IMR-90 (cell line): ENCODE measurements at regions of chr7 and their contacts with region 1.

Region 1: DNA sequence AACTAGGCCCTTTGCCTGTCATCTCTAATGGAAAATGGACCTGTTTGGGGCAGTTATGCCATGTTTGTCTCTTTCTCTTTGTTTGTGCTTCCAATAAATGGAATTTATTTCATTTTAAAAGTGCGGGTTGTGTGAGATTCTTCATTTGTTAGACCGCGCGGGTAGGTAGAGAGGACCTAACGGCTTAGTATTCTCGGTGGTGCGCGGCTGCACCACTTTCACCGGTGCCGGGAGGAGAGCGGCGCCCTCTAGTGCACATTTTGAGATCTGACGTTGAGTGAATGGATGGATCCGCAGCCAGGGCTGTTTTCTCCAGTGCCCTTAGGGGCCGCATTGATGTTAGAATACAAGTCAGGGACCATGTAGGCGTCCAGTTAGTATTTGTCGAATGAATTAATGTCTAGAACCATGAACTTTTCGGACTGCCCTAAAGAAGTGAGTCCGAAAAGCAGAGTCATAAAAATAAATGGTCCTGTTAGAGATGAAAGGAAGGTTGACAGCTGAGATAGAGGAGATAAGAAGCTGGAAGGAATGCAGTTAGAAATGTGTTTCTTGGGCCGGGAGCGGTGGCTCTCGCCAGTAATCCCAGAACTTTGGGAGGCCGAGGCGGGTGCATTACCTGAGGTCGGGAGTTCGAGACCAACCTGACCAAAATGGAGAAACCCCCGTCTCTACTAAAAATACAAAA is 29.3 kb upstream of the GIMAP8 start:
- DNase-seq: peak; percentile 58
- ATAC-seq: peak; percentile 99
- H3K4me3 ChIP-seq: no peak overlapping the region
- H3K27ac ChIP-seq: no peak overlapping the region
- H3K4me1 ChIP-seq: no peaks in the 10 kb centered on the region
- H3K27me3 ChIP-seq: no peaks in the 10 kb centered on the region
- CTCF ChIP-seq: peak; percentile 79
- POLR2A ChIP-seq: no peak
- RAD21 ChIP-seq: peak; percentile 86

Region 2: GRCh38 chr7:149873074-149873969 is 547.8 kb before region 1 on chr7 and contains the start of gene ATP6V0E2:
- CTCF ChIA-PET with region 1: no interaction called
- POLR2A ChIA-PET with region 1: no interaction called
- dilution Hi-C with region 1: no loop called
- in situ Hi-C with region 1: loop called (anchors 25 kb)
- intact Hi-C with region 1: no loop called
- DNase-seq: peak; percentile 89
- ATAC-seq: peak; percentile 97
- H3K4me3 ChIP-seq: peak within 1 kb of the TSS; percentile 74
- H3K27ac ChIP-seq: peak within 1 kb of the TSS; percentile 13; the same call in 1 of the 2 replicates
- H3K4me1 ChIP-seq: peaks cover 3% of the 10 kb centered on the region
- H3K27me3 ChIP-seq: no peaks in the 10 kb centered on the region
- CTCF ChIP-seq: no peak
- POLR2A ChIP-seq: peak; percentile 52; the same call in 1 of the 2 replicates
- RAD21 ChIP-seq: no peak
- total RNA-seq, gene ATP6V0E2: 5.7 and 10.3 TPM in 2 replicates

Region 3: GRCh38 chr7:150307904-150308303 is 113.2 kb before region 1 on chr7:
- CTCF ChIA-PET with region 1: no interaction called
- POLR2A ChIA-PET with region 1: no interaction called
- dilution Hi-C with region 1: no loop called
- in situ Hi-C with region 1: no loop called
- intact Hi-C with region 1: no loop called
- DNase-seq: no peak
- ATAC-seq: no peak
- H3K4me3 ChIP-seq: no peak overlapping the region
- H3K27ac ChIP-seq: no peak overlapping the region
- H3K4me1 ChIP-seq: peaks cover 3% of the 10 kb centered on the region; the same call in 1 of the 2 replicates
- H3K27me3 ChIP-seq: no peaks in the 10 kb centered on the region
- CTCF ChIP-seq: no peak
- POLR2A ChIP-seq: no peak
- RAD21 ChIP-seq: no peak

Region 4: DNA sequence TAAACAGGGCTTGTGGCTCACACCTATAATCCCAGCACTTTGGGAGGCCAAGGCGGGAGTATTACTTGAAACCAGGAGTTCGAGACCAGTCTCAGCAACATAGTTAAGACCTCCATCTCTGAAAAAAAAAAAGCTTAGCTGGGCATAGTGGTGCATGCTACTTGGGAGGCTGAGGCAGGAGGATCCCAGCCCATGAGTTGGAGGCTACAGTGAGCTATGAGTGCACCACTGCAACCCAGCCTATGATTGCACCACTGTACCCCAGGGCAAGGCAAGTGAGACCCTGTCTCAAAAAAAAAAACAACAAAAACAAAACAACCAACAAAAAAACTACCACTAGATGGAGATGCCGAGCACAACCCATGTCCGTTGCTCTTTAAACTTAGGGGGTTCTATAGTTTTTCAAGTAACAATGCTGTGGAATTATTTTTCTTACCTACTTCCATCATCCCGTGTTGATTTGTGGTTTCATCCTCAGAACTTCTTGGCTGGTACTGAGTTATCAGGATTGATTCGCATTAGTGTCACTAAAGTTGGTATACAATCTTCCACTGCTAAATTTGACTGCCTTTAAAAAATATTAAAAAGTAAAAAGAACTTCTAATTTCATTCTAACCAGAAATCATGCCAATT is 64.8 kb before region 1 on chr7:
- CTCF ChIA-PET with region 1: no interaction called
- POLR2A ChIA-PET with region 1: no interaction called
- dilution Hi-C with region 1: no loop called
- in situ Hi-C with region 1: no loop called
- intact Hi-C with region 1: loop called (anchors 2 kb)
- DNase-seq: peak; percentile 33
- ATAC-seq: peak; percentile 42; the same call in 1 of the 2 replicates
- H3K4me3 ChIP-seq: no peak overlapping the region
- H3K27ac ChIP-seq: no peak overlapping the region
- H3K4me1 ChIP-seq: no peaks in the 10 kb centered on the region; the same call in 1 of the 2 replicates
- H3K27me3 ChIP-seq: no peaks in the 10 kb centered on the region
- CTCF ChIP-seq: peak; percentile 65
- POLR2A ChIP-seq: no peak
- RAD21 ChIP-seq: peak; percentile 62

Region 5: DNA sequence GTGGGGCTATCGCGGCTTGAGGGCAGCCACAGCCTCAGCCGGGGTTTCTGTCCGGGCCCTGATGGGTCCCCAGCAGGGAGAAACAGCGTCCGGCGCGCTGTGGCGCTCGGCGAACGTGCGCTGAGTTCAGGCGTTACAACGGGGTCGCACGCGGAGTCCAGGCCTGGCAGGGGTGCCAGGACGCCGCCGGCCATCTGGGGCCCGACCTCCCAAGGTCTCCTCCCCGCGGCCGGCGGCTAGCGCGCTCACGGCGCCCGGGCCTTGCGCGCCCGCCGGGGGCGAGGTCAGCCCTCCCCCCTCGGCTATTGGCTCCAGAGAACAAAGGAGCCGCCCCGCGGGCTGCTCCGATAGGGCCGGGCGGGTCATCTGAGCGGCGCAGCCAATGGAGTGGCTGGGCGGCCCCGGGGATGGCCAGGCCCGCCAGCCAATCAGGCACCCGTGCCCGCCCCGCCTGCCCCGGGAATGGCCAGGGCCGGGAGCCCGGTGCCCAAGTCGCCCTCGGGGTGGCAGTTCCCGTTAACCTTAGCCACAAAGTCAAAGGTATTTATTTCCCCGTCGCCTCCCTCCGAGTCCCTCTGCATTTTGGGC is 42.2 kb before region 1 on chr7 and contains the start of gene ZNF775:
- CTCF ChIA-PET with region 1: no interaction called
- POLR2A ChIA-PET with region 1: no interaction called
- dilution Hi-C with region 1: no loop called
- in situ Hi-C with region 1: no loop called
- intact Hi-C with region 1: loop called (anchors 2 kb)
- DNase-seq: peak; percentile 89
- ATAC-seq: peak; percentile 97
- H3K4me3 ChIP-seq: peak within 1 kb of the TSS; percentile 93
- H3K27ac ChIP-seq: peak within 1 kb of the TSS; percentile 81
- H3K4me1 ChIP-seq: peaks cover 10% of the 10 kb centered on the region
- H3K27me3 ChIP-seq: no peaks in the 10 kb centered on the region
- CTCF ChIP-seq: no peak
- POLR2A ChIP-seq: peak; percentile 52; the same call in 1 of the 2 replicates
- RAD21 ChIP-seq: no peak
- total RNA-seq, gene ZNF775: 1.4 TPM in 2 replicates

Region 6: DNA sequence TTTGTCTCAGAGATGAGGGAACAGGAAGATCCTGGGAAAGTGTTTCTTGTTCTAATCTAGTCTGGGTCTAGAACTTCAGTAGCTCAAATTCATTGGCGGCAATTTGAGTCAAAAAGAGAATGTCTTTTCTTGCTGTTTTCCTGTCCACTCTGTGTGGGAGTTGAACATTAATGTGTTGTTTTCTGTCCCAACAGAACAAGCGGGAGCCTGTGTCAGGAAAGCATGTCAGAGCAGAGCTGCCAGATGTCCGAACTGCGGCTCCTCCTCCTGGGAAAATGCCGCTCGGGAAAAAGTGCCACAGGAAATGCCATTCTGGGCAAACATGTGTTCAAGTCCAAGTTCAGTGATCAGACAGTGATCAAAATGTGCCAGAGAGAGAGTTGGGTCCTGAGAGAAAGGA is 45.3 kb after region 1 on chr7:
- CTCF ChIA-PET with region 1: no interaction called
- POLR2A ChIA-PET with region 1: no interaction called
- dilution Hi-C with region 1: no loop called
- in situ Hi-C with region 1: no loop called
- intact Hi-C with region 1: no loop called
- DNase-seq: no peak
- ATAC-seq: no peak
- H3K4me3 ChIP-seq: no peak overlapping the region
- H3K27ac ChIP-seq: no peak overlapping the region
- H3K4me1 ChIP-seq: no peaks in the 10 kb centered on the region
- H3K27me3 ChIP-seq: no peaks in the 10 kb centered on the region
- CTCF ChIP-seq: no peak
- POLR2A ChIP-seq: no peak
- RAD21 ChIP-seq: no peak

Region 7: DNA sequence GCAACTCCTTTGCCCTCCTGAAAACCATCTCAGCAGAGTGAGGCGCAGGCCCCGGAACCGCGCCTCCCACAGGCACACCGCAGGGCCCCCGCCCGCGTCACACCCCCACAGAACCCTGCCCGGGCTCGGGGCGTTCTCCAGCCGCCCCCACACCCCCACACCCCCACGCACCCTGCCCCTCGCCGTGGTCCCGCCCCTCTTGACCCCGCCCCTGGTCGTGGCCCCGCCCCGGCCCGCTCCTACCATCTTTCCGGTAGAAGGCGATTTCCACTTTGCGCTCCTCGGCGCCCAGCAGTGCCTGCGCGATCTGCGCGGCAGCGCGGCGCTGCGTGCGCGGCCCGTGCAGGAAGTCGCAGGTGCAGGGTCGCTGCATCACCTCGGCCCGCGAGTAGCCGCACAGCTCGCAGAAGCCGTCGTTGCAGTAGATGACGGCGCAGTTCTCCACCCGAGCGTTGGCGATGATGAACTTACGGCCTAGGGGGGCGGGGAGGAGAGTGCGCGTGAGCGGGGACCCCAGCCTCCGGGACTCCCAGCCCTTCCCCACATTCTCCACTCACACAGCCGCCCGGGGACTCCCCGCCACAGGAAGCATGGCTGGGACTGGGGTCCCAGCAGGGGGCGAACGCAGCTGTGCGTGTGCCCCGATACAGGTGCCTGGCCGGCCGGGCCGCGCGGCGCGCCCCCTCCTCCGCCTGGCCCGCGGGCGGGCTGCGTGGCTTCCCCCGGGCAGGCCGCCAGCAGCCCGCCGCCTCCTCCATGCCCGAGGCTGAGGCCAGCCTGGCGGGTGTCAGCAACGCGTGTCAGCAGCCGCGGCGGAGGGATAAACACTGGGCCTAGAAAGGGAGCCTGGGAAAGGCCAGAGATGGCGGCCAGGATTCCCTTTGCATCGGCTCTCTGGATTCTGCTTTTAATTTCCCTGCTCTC is 553.6 kb after region 1 on chr7:
- CTCF ChIA-PET with region 1: no interaction called
- POLR2A ChIA-PET with region 1: no interaction called
- dilution Hi-C with region 1: no loop called
- in situ Hi-C with region 1: loop called (anchors 25 kb)
- intact Hi-C with region 1: no loop called
- DNase-seq: peak; percentile 25
- ATAC-seq: peak; percentile 7
- H3K4me3 ChIP-seq: peak overlapping the region; percentile 25
- H3K27ac ChIP-seq: no peak overlapping the region
- H3K4me1 ChIP-seq: peaks cover 31% of the 10 kb centered on the region; the same call in 1 of the 2 replicates
- H3K27me3 ChIP-seq: peaks cover 43% of the 10 kb centered on the region
- CTCF ChIP-seq: 0 out of 2 replicates have a peak, but pooled peaks have one; percentile 26
- POLR2A ChIP-seq: no peak
- RAD21 ChIP-seq: no peak